ENCODE measurements at regions of chr11 and their contacts with region 1.

Region 1: DNA sequence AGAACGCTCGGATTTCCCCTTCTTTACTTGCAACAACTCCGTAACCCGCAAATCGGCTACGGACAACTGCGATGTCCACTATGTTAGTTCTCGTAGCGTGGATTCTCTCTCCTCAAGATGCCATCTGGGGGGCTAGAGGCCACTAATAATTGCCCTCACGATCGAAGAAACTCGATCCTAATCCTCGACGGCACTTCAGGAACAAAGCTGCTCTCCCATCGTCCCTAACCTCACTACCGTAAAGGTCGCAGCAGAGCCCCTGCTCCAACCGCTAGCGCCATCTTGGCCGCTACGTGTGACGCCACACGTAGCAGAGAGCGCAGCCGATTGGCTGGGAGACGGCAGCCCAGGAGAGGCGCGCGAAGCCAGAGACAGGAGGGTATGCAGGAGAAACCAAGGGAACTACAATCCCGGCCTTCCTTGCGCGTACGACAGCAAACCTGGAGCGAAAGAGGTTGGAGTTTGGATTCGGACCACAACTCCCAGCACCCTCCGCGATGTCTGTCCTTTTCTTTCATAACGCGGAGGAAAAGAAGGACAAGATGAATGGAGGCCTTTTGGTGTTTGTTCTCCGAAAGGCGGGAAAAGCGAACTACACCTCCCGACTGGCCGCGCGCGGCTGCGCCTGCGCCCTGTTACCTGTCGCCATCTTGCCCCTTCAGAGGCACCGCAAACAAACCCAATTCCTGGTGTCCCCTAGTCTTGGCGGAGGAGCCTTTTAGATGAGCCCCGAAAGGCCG is at the start of gene EMSY:
- DNase-seq: peak; percentile 97 to 98 (median 98)
- ATAC-seq: peak; percentile 96 to 98 (median 98)
- H3K4me3 ChIP-seq: peak within 1 kb of the TSS; percentile 71 to 100 (median 94)
- H3K27ac ChIP-seq: peak within 1 kb of the TSS; percentile 83 to 98 (median 92)
- H3K4me1 ChIP-seq: peaks cover 0 to 28% (median 14%) of the 10 kb centered on the region in 12 donors
- H3K27me3 ChIP-seq: no peaks in the 10 kb centered on the region
- CTCF ChIP-seq: peak in 1 of 12 donors; percentile 9
- POLR2A ChIP-seq: peak; percentile 91 to 95
- total RNA-seq, gene EMSY: 14.5 to 37.6 (median 18.6) TPM

Region 2: DNA sequence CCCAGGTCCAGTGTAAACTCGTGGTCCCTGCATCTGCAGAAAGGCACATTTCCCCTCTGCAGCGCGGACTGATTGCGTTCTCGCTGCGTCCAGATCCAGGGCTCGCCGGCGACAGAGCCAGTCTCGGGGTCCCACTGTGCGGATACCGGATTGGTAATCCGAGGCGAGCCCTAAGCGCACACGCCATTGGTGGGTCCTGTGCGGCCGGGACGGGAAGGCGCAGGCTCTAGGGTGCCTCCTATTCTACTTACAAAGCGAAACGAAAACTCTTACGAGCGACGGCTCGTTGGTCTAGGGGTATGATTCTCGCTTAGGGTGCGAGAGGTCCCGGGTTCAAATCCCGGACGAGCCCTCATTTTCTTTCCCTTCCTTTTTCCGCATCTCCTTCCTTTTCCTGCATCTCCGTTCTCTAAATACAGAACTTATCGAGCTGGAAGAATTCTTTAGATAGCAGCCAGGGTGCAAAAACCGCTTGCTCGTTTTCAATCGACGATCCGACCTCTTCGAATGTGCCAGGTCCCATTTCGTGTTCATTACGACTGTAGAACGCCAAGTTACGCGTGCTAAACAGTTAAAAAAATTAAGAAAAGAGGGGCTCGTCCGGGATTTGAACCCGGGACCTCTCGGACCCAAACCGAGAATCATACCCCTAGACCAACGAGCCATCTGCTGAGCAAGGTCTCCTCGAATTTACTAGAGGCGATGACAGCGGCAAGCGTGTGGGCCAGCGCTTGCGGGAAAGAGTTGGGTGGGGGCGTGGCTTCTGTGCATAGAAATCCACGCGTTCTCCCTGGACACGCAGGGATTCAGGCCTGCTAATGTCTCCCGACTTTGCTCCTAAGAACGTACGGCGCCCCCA is 209.1 kb before region 1 on chr11:
- intact Hi-C with region 1: loop called in 3 of 10 experiments (anchors 1 to 10 kb)
- DNase-seq: peak; percentile 90 to 94 (median 91)
- ATAC-seq: peak; percentile 90 to 92 (median 92)
- H3K4me3 ChIP-seq: peak overlapping the region; percentile 69 to 93 (median 80)
- H3K27ac ChIP-seq: peak overlapping the region; percentile 35 to 90 (median 81)
- H3K4me1 ChIP-seq: peaks cover 0 to 21% (median 8%) of the 10 kb centered on the region in 12 donors
- H3K27me3 ChIP-seq: no peaks in the 10 kb centered on the region
- CTCF ChIP-seq: no peak
- POLR2A ChIP-seq: no peak

Region 3: GRCh38 chr11:76380967-76381719 is 63.4 kb before region 1 on chr11 and contains the starts of genes GVQW3 and THAP12:
- intact Hi-C with region 1: loop called in 9 of 10 experiments (anchors 1 to 5 kb)
- DNase-seq: peak; percentile 97 to 99 (median 98)
- ATAC-seq: peak; percentile 97 to 99 (median 98)
- H3K4me3 ChIP-seq: peak within 1 kb of the TSS; percentile 72 to 99 (median 93)
- H3K27ac ChIP-seq: peak within 1 kb of the TSS; percentile 82 to 92 (median 87)
- H3K4me1 ChIP-seq: peaks cover 0 to 53% (median 29%) of the 10 kb centered on the region in 12 donors
- H3K27me3 ChIP-seq: no peaks in the 10 kb centered on the region
- CTCF ChIP-seq: peak in 6 of 12 donors; percentile 14 to 59 (median 35)
- POLR2A ChIP-seq: peak; percentile 28 to 91
- total RNA-seq, gene GVQW3: 0.19 to 2.3 (median 1.2) TPM
- total RNA-seq, gene THAP12: 14.2 to 29.3 (median 19.5) TPM

Region 4: DNA sequence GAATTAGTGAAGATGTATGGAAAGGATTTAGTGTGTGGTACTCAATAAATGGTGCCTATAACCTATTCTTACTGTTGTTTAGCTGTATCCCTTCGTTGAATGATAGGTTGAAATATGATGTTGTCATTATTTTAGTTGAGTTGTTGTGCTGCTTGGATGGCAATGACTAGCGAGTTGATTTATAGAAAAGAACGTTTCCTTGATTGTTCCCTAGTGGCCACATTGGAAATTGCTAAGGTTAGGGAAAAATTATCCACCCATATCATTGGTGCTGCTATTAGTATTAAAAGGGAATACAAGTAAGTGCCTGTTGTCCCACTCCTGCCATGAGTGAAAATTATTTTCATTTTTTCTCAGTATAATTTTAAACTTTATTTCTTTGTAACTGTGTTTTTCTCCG is 14.7 kb after region 1 on chr11:
- intact Hi-C with region 1: no loop called
- DNase-seq: no peak
- ATAC-seq: no peak
- H3K4me3 ChIP-seq: no peak overlapping the region
- H3K27ac ChIP-seq: no peak overlapping the region
- H3K4me1 ChIP-seq: peaks cover 0 to 12% (median 0%) of the 10 kb centered on the region in 12 donors
- H3K27me3 ChIP-seq: no peaks in the 10 kb centered on the region
- CTCF ChIP-seq: peak in 9 of 12 donors; percentile 7 to 56 (median 31)
- POLR2A ChIP-seq: no peak

Region 5: DNA sequence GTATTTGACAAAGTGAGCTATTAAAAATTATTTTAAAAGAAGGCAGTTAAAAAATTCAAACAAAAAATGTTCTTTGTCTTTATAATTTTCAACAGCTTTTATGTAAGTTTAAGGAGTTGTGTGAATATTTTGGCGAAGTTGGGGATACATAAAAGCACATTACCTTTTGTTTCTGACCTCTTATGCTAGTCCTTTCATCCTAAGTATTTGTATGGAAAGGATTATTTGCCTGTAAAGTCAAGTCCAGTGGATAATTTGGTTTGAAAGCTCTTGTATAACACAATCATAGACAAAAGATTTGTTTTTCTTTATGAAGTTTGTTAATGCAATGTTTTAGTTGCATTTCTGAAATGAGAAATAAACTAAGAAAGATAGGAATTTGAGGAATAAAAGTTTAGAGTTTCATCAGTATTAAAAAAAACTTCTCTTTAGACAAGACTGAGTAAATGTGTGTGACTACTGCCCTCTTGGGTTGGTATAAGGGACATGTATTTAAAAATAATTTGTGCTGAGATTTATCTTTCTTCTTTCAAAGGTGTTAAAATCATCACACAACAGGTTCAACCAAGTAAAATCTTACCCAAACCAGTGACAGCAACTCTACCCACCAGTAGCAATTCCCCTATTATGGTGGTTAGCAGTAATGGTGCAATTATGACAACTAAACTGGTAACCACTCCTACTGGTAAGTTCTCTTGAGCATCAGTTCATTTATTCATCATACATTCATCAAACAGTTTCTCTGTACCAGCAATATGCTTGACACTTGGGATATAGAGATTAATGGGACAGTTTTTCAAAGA is 68.5 kb after region 1 on chr11:
- intact Hi-C with region 1: no loop called
- DNase-seq: no peak
- ATAC-seq: no peak
- H3K4me3 ChIP-seq: no peak overlapping the region
- H3K27ac ChIP-seq: no peak overlapping the region
- H3K4me1 ChIP-seq: peaks cover 0 to 14% (median 1%) of the 10 kb centered on the region in 12 donors
- H3K27me3 ChIP-seq: no peaks in the 10 kb centered on the region
- CTCF ChIP-seq: peak; percentile 17 to 66 (median 44)
- POLR2A ChIP-seq: no peak

Region 6: DNA sequence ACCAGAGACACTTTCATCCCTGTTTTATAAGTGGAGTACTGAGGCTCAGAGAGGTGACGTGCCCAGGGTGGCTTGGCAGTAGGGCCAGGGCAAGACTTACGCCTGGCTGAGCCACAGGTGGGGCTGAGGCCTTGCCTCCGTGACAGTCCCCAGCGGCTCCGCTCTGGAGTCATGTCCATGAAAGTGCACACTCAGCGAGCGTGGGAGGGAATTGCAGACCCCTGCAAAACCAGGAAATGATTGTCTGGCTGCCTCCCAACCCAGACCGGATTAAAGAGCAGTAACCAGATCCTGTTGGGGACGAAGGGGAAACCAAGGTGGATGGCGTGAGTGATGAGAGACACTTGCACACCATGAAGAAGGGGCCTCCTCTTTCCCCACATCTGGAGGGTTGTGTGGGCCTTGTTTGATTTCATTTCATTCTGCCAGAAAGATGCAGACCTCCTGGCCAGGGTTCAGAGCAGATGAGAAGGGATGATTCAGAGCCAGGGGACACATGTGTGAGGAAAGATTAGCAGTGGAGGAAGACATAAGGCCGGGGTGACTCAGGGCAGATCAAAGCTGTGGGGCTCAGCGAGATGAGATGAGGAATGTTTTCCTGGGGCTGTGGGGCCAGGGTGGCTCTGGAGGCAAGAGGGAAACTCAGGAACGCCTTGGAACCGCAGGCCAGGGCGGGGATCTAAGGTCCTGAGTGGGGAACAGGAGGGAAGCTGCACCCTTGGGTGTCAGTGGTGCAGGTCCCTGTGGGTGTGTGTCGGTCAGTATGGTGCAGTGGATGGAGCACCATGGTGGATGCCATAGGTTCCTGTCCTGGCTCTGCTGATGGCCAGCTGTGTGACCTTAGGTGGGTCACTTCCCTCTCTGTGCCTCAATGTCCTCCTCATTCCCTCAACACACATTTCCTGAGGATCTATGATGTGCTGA is 255.9 kb after region 1 on chr11:
- intact Hi-C with region 1: no loop called
- DNase-seq: peak in 1 of 5 donors; percentile 56
- ATAC-seq: peak in 3 of 4 donors; percentile 18 to 43 (median 38)
- H3K4me3 ChIP-seq: no peak overlapping the region
- H3K27ac ChIP-seq: no peak overlapping the region
- H3K4me1 ChIP-seq: peaks cover 0 to 3% (median 0%) of the 10 kb centered on the region in 12 donors
- H3K27me3 ChIP-seq: no peaks in the 10 kb centered on the region
- CTCF ChIP-seq: no peak
- POLR2A ChIP-seq: no peak